Motor neuron (in vitro differentiated cells): ENCODE measurements at regions of chr5 and their contacts with region 1.

Region 1: GRCh38 chr5:134053840-134054338 is 49.1 kb upstream of the VDAC1 start:
- ATAC-seq: peak; percentile 40 to 66 (median 54)
- H3K4me3 ChIP-seq: no peak overlapping the region
- H3K27ac ChIP-seq: no peak overlapping the region
- H3K4me1 ChIP-seq: peaks cover 5 to 9% of the 10 kb centered on the region in 2 donors

Region 2: DNA sequence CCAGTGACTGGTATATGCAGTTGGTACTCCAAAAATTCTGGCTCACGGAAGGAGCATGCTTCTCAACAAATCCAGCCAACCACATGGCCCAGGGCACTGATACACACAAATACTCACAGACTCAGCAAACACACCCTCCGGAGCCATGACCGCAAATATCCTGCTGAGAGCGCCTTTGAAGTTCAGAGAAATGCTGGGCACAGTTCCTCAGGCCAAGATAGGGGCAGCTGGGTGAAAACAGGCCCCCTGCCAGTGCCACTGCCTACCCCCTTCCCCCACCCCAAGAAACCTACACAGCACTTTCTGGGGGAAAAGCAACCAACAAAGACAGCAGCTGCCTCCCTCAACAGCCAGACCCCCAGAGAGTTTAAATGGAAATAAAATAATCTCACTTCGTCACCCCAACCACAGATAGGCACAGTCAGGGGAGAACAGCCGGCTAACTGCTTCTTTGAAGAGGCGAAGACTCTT is 205.5 kb before region 1 on chr5:
- in situ Hi-C with region 1: no loop called
- ATAC-seq: no peak
- H3K4me3 ChIP-seq: no peak overlapping the region
- H3K27ac ChIP-seq: no peak overlapping the region
- H3K4me1 ChIP-seq: no peaks in the 10 kb centered on the region

Region 3: DNA sequence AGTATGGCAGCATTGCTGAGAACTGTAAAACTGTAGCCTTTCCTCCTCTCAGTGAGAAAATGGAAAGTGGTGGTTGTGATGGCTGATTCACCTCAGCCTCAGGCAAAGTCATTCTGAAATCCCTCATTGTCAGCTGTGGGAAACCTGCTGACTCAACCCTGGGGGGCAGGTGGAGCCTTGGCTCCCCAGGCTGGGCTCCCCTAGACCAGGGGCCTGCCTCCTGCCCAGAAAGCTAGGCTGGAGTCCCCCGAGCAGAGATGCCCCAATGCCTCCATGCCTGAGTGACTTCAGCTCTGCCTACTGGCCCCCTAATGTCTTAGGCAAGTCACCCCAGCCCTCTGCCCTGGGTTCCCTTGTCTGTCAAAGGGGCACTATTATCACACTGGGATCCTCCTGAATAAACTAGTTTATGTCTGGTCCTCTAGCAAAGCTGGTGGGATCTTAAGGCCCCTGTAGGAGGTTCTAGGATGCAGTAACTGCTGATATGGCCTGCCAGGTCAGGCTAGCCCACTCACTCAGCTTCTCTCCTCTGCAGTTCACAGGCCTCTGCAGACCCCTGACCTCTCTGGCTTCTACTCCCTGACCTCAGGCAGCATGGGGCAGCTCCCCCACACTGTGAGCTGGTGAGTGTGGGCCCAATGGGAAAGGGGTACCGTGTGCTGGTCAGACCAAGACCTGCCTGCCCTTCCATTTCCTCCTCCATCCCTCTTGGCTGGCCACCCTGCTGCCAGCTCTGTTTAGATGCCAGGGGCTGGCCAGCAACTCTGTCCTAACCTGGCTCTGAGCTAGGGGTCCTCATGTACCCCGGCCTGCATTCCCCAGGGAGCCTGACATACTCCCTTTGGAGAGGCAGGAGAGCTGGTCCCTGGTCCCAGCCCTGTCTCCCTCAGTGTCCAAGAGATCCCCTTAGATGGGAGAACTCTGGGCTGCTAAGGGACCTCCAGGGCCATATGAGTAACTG is 84.8 kb after region 1 on chr5:
- in situ Hi-C with region 1: loop called in 5 of 9 experiments (anchors 5 to 25 kb)
- ATAC-seq: peak in 2 of 8 experiments; percentile 53
- H3K4me3 ChIP-seq: no peak overlapping the region
- H3K27ac ChIP-seq: no peak overlapping the region
- H3K4me1 ChIP-seq: no peaks in the 10 kb centered on the region

Region 4: DNA sequence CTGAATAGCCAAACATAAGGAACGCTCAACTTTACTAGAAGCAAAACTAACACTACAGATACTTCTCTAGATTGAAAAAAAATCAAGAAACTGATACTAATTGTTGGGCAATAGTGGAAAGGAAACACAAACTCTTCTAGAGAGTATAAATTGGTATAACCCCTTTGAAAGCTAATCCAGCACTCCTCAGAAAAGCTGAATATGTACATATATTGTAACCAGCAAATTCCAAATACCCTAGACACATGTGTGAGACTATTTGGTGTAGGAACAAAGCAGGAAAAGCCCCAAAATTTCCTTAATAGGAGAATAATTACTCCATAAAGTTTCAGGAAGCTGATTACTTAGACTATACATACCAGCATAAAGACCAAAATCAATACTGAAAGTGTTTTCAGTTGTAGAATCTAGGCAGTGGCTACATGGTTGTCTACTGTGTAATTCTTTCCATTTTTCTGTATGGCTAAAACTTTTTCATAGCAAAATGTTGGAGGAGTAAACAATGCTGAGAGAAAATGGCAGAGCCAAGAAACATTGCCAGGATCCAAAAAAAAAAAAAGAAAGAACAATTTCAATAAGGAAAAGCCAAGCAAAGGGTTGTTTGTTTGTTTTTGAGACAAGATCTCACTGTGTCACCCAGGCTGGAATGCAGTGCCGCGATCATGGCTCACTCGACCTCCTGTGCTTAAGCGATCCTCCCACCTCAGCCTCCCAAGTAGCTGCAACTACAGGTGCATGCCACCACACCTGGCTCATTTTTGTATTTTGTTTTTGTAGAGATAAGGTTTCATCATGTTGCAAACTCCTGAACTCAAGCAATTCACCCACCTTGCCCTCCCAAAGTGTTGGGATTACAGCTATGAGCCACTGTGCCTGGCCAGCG is 107.9 kb after region 1 on chr5:
- in situ Hi-C with region 1: no loop called
- ATAC-seq: peak in 3 of 8 experiments; percentile 69 to 86 (median 76)
- H3K4me3 ChIP-seq: no peak overlapping the region
- H3K27ac ChIP-seq: no peak overlapping the region
- H3K4me1 ChIP-seq: no peaks in the 10 kb centered on the region